Mucosa of descending colon (tissue), 3 donors: ENCODE measurements at regions of chr18 and their contacts with region 1.

Region 1: DNA sequence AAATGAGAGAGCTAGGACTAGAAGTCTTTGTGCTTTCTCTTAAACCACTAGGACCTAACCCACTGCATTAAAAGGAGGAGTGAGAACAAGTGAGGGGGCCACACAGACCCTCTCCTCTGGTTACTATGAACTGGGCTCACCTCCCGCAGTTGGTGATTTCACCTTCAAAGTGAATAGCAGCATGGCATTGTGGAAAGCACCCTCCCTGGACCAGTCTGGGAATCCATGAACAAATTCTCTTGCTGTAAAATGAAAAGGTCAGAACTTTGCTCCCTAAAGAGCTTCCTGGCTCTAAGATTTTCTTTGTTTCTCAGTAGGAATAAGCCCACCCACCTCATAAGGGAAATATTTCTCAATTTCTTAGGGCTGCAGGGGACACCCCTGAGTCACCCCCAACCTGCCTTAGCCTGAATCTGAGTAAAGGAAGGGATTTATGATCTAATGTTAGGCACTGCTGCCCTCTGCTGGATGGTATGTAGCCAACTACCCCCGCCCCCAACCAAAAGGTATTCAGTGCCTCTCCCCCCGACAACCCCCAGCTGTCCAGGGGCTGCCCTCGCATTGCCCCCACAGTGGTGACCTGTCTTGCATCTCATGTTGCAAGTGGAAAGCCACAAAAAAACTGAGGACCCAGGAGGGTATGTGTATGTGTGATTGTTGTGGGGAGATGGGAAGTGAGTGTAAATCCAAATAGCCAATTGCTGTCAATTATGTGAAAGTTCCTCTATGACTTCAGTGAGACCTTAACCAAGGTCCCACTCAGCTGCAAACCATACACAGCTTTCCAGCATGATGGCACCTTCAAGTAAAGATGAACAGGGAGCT is 230.9 kb upstream of the SLC14A2 start:
- DNase-seq: peak in 2 of 3 donors; percentile 44 to 75
- ATAC-seq: peak; percentile 76
- H3K4me3 ChIP-seq: no peak overlapping the region
- H3K4me1 ChIP-seq: no peaks in the 10 kb centered on the region
- CTCF ChIP-seq: no peak

Region 2: GRCh38 chr18:45275367-45276113 is 108.8 kb before region 1 on chr18:
- intact Hi-C with region 1: loop called in 1 of 2 experiments (anchors 5 kb)
- DNase-seq: peak in 1 of 3 donors; percentile 44
- ATAC-seq: no peak
- H3K4me3 ChIP-seq: no peak overlapping the region
- H3K4me1 ChIP-seq: peaks cover 8% of the 10 kb centered on the region
- CTCF ChIP-seq: peak; percentile 61

Region 3: DNA sequence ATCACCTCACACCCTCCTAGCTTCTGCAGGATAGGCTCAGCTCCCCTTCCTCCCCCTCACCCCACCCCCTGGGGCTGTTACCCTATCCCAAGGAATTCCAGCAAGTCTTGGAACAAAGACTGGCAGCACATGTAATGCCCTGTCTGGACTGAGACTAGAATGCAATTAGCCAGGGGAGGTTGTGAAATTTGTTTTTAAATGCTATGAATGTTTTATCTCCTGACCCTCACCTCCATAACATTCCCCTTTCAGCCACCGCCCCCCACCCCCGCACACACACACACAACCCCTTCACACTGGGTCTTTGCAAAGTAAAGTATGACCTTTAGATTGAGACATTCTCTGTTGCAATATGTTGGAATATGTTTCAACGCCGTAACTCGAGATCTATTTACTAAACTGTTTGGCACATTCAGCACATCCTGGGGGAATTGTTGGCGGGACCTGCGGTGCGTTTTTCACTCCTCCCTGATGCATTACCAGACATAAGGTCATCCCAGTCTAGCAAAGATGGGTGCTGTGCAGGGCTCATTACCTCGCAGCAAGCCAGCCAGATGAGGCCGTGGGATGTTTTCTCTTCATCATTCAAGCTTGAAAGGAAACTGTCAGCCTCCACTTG is 59.7 kb before region 1 on chr18:
- intact Hi-C with region 1: no loop called
- DNase-seq: peak in 1 of 3 donors; percentile 4
- ATAC-seq: peak; percentile 23
- H3K4me3 ChIP-seq: no peak overlapping the region
- H3K4me1 ChIP-seq: no peaks in the 10 kb centered on the region
- CTCF ChIP-seq: no peak

Region 4: GRCh38 chr18:45576931-45577330 is 192.6 kb after region 1 on chr18:
- intact Hi-C with region 1: no loop called
- DNase-seq: no peak
- ATAC-seq: no peak
- H3K4me3 ChIP-seq: no peak overlapping the region
- H3K4me1 ChIP-seq: no peaks in the 10 kb centered on the region
- CTCF ChIP-seq: no peak